Mammary epithelial cell (primary cell): ENCODE measurements at regions of chr14 and their contacts with region 1.

Region 1: DNA sequence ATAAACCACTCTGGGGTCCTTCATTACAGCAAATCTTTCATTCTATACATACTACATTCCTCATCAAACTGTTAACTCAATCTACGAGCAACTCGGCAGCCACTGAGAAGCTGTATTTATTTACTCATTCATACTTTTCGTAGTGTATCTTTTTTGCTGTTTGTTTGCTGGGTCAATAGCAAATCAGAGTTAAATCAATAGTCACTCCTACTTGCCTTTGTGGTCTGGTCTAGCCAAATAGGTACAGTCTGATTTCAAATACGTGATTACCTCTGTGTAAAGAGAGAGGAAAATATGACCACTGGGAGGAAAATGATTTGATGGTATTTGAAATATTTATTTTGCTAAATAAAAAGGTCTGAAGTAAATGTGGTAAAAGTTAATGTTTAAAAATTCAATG is 471.8 kb upstream of the NOVA1 start:
- DNase-seq: no peak
- H3K4me3 ChIP-seq: no peak overlapping the region
- H3K27ac ChIP-seq: no peak overlapping the region
- H3K4me1 ChIP-seq: no peaks in the 10 kb centered on the region
- H3K27me3 ChIP-seq: no peaks in the 10 kb centered on the region
- CTCF ChIP-seq: no peak

Region 2: GRCh38 chr14:25988536-25988935 is 1081.1 kb before region 1 on chr14:
- CTCF ChIA-PET with region 1: no interaction called
- dilution Hi-C with region 1: no loop called
- in situ Hi-C with region 1: no loop called
- intact Hi-C with region 1: no loop called
- DNase-seq: no peak
- H3K4me3 ChIP-seq: no peak overlapping the region
- H3K27ac ChIP-seq: no peak overlapping the region
- H3K4me1 ChIP-seq: no peaks in the 10 kb centered on the region
- H3K27me3 ChIP-seq: no peaks in the 10 kb centered on the region
- CTCF ChIP-seq: no peak

Region 3: DNA sequence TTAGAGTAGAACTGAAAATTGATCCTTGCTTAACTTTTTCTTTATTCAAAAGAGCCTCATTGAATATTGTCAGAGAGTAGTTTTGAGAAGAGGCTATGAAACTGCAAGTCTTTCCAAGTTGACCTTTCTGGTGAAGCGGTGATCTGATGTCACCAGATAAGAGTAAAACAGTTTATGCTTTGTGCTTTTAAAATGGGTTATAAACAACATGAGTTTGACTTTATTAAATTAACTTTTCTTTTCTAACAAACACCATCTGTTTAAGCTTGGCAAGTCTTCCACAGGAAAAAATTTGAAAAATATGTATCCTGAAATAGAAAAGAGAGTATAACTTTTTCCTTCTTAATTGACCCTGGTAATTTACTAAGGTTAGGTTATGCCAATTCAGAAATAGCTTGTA is 63.1 kb before region 1 on chr14:
- CTCF ChIA-PET with region 1: no interaction called
- dilution Hi-C with region 1: loop called (anchors 5 kb)
- in situ Hi-C with region 1: no loop called
- intact Hi-C with region 1: no loop called
- DNase-seq: no peak
- H3K4me3 ChIP-seq: no peak overlapping the region
- H3K27ac ChIP-seq: no peak overlapping the region
- H3K4me1 ChIP-seq: no peaks in the 10 kb centered on the region
- H3K27me3 ChIP-seq: no peaks in the 10 kb centered on the region
- CTCF ChIP-seq: no peak

Region 4: DNA sequence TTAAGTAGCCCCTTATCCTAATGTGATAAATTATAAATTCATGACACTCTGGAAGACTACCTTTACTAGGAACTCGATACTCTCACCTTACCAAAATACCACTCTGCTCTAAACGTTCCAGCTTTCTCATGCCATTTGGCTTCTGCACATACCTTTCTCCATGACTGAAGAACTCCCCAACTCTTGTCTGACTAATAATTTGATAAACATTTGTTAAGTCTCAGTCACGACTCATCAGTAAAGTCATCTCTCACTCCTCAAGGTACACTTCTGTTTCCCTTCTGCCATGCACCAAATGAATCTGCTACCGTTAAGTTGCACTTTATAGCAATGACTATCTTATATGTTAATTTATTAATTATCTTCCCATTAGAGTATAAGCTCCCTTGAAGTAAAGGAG is 26.5 kb after region 1 on chr14:
- CTCF ChIA-PET with region 1: no interaction called
- dilution Hi-C with region 1: no loop called
- in situ Hi-C with region 1: no loop called
- intact Hi-C with region 1: no loop called
- DNase-seq: no peak
- H3K4me3 ChIP-seq: no peak overlapping the region
- H3K27ac ChIP-seq: no peak overlapping the region
- H3K4me1 ChIP-seq: no peaks in the 10 kb centered on the region
- H3K27me3 ChIP-seq: no peaks in the 10 kb centered on the region
- CTCF ChIP-seq: no peak